Activated naive CD4-positive, alpha-beta T cell treated with anti-CD3 and anti-CD28 coated beads for 36 hours (primary cell): ENCODE measurements at regions of chr2 and their contacts with region 1.

Region 1: GRCh38 chr2:36785179-36785795 is 88.8 kb downstream of the VIT start:
- DNase-seq: peak; percentile 80
- H3K4me3 Mint-ChIP-seq: no peak overlapping the region
- H3K27ac Mint-ChIP-seq: no peak overlapping the region
- H3K4me1 Mint-ChIP-seq: no peaks in the 10 kb centered on the region
- H3K27me3 Mint-ChIP-seq: no peaks in the 10 kb centered on the region

Region 2: DNA sequence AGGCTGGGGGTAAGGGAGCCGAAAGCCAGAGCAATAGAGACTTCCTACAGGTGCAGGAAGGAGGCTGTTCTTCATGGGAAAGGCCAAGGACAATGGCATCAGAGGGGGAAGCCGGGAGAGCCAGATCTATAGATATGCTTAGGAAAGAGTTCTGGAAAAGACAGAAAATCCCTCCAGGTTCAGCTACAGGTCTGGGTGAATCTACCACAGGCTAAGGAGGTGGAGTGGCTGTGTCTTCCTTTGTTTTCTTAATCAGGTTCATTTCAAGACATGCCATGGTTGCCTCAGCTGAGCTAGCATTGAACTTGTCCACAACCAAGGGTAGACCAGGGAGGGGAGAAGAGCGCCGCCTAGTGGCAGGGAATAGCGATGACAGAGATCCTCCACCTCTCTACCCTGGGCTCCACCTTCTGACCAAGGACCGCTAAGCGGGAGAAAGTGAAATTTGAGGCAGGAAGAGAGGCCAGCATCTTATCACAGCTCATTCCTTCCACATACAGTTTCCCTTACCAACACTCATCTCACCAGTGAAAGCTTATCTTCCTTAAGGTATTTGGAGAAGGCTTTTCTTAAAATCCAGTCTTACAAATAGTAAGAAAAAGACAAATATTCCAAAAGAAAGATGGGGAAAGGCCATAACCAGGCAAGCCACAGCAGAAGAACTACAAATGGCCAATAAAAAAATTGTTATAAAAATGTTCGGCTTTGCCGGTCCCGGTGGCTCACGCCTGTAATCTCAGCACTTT is 14.6 kb before region 1 on chr2:
- CTCF ChIA-PET with region 1: interaction called, 10 read pairs
- intact Hi-C with region 1: no loop called
- DNase-seq: peak; percentile 67
- H3K4me3 Mint-ChIP-seq: no peak overlapping the region
- H3K27ac Mint-ChIP-seq: no peak overlapping the region
- H3K4me1 Mint-ChIP-seq: no peaks in the 10 kb centered on the region
- H3K27me3 Mint-ChIP-seq: peaks cover 3% of the 10 kb centered on the region

Region 3: DNA sequence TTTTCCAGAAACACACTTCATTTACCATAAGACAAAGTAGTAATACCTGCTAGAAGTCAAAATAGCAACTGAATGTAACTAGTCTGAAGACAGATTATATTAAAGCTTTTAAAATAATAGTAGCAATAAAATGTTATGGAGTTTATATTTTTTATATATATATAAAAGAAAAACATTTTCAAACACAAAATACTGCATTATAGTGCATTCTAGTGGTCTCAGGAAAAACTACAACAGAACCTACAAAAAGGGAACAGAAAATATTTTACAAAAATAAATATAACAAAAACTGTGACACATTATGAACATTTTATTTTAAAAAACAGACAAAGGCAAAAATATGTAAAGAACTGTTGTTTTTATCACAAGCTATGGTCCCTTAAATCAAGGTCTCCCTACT is 133.0 kb after region 1 on chr2:
- CTCF ChIA-PET with region 1: interaction called, 11 read pairs
- intact Hi-C with region 1: loop called (anchors 1 kb)
- DNase-seq: no peak
- H3K4me3 Mint-ChIP-seq: no peak overlapping the region
- H3K27ac Mint-ChIP-seq: no peak overlapping the region
- H3K4me1 Mint-ChIP-seq: peaks cover 19% of the 10 kb centered on the region
- H3K27me3 Mint-ChIP-seq: no peaks in the 10 kb centered on the region

Region 4: GRCh38 chr2:37026050-37026449 is 240.8 kb after region 1 on chr2:
- CTCF ChIA-PET with region 1: no interaction called
- intact Hi-C with region 1: loop called (anchors 1 kb)
- DNase-seq: no peak
- H3K4me3 Mint-ChIP-seq: no peak overlapping the region
- H3K27ac Mint-ChIP-seq: no peak overlapping the region
- H3K4me1 Mint-ChIP-seq: no peaks in the 10 kb centered on the region
- H3K27me3 Mint-ChIP-seq: no peaks in the 10 kb centered on the region

Region 5: DNA sequence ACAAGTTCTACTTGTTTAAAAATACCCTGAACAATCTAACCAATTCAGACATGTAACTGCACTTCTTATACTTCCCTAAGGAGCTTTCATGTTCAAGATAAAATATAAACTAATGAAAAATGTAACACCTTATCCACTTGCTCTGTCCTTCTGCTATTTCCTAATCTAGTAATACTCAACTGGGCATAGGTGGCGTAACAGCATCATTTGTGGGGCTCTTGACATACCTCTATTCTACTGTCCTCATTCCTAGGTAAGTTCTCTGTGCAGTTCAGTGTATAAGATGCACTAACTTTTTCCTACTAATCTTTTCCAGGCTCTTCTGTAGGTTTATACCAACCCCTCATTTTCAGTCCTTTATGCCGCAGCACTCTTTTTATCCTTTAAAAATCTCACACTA is 502.7 kb after region 1 on chr2:
- CTCF ChIA-PET with region 1: no interaction called
- intact Hi-C with region 1: loop called (anchors 10 kb)
- DNase-seq: peak; percentile 59
- H3K4me3 Mint-ChIP-seq: no peak overlapping the region
- H3K27ac Mint-ChIP-seq: no peak overlapping the region
- H3K4me1 Mint-ChIP-seq: no peaks in the 10 kb centered on the region
- H3K27me3 Mint-ChIP-seq: no peaks in the 10 kb centered on the region